Tibial artery (tissue), 4 donors: ENCODE measurements at regions of chr7 and their contacts with region 1.

Region 1: GRCh38 chr7:143292876-143293275 is 4.7 kb downstream of the CASP2 start:
- DNase-seq: no peak
- H3K4me3 ChIP-seq: no peak overlapping the region
- H3K27ac ChIP-seq: no peak overlapping the region
- H3K4me1 ChIP-seq: peaks cover 0 to 46% (median 32%) of the 10 kb centered on the region in 4 donors
- H3K27me3 ChIP-seq: no peaks in the 10 kb centered on the region
- CTCF ChIP-seq: no peak

Region 2: DNA sequence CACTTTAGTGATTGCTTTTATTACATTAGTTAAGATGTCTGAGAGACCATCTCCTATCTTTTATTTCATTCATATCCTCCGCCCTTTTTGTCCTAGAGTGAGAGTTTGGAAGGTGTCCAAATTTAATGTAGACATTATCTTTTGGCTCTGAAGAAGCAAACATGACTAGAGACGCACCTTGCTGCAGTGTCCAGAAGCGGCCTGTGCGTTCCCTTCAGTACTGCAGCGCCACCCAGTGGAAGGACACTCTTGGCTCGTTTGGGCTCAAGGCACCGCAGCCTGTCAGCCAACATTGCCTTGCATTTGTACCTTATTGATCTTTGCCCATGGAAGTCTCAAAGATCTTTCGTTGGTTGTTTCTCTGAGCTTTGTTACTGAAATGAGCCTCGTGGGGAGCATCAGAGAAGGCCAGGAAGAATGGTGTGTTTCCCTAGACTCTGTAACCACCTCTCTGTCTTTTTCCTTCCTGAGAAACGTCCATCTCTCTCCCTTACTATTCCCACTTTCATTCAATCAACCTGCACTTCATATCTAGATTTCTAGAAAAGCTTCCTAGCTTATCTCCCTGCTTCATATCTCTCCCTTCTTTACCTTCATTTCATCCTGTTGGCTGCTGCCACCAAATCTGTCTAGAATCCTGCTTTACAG is 12.7 kb after region 1 on chr7:
- intact Hi-C with region 1: no loop called
- DNase-seq: peak in 1 of 2 donors; percentile 53
- H3K4me3 ChIP-seq: no peak overlapping the region
- H3K27ac ChIP-seq: no peak overlapping the region
- H3K4me1 ChIP-seq: no peaks in the 10 kb centered on the region
- H3K27me3 ChIP-seq: no peaks in the 10 kb centered on the region
- CTCF ChIP-seq: peak; percentile 53 to 60

Region 3: DNA sequence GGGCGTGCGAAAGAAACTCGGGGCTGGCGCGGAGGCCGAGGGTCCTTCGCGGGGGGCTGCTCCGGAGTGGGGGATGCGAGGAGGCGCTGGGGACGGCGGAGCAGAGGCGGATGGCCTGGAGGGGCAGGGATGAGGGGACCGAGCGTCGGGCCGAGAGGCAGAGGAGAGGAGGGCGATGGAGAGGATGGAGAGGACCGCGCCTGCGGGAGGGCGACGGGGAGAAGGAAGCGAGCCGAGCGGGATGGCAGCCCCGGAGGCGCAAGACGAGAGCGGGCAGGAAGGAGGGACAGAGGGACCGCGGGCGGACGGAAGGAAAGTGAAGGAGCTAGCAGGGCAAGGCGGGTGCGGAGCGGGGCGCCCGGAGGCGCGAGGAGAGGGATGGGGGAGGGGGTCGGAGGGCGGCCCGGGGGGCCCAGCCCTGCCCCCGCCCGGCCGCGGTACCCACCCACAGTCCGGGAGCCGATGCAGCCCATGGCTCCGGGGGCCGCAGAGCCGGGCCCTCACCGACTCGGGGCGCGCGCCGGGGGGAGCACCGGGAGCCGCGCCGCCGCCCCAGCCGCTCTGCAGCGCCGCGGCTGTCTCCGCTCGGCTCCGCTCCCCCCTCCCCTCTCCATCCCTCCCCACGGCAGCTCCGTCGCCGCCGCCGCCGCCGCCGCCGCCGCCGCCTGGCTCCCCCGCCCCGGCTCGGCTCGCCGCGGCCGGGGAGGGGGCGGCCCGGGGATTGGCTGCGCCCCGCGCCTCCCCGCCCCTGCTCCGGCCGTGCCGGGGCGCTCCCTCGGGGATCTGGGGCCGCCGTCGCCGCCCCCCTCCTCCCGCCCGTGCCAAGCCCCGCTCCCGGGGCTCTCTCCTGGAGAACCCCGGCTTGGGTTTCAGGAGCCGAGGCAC is 69.5 kb after region 1 on chr7 and contains the start of gene FAM131B:
- intact Hi-C with region 1: loop called (anchors 5 kb)
- DNase-seq: no peak
- H3K4me3 ChIP-seq: peak within 1 kb of the TSS; percentile 56 to 62
- H3K27ac ChIP-seq: no peak within 1 kb of the TSS
- H3K4me1 ChIP-seq: peaks cover 0 to 18% (median 14%) of the 10 kb centered on the region in 4 donors
- H3K27me3 ChIP-seq: peaks cover 0 to 26% of the 10 kb centered on the region in 2 donors
- CTCF ChIP-seq: no peak